PC-3 (cell line): ENCODE measurements at regions of chr4 and their contacts with region 1.

Region 1: GRCh38 chr4:20684852-20685763 is 15.2 kb upstream of the PACRGL start:
- DNase-seq: peak; percentile 58
- ATAC-seq: no peak
- H3K4me3 ChIP-seq: no peak overlapping the region
- H3K27ac ChIP-seq: no peak overlapping the region
- H3K4me1 ChIP-seq: no peaks in the 10 kb centered on the region; the same call in 1 of the 2 replicates
- H3K27me3 ChIP-seq: no peaks in the 10 kb centered on the region
- CTCF ChIP-seq: peak; percentile 66; the same call in 1 of the 2 replicates

Region 2: GRCh38 chr4:20305976-20306375 is 379.1 kb before region 1 on chr4:
- CTCF ChIA-PET with region 1: no interaction called
- POLR2A ChIA-PET with region 1: no interaction called
- intact Hi-C with region 1: loop called (anchors 10 kb)
- DNase-seq: peak; percentile 36
- ATAC-seq: no peak
- H3K4me3 ChIP-seq: no peak overlapping the region
- H3K27ac ChIP-seq: no peak overlapping the region
- H3K4me1 ChIP-seq: no peaks in the 10 kb centered on the region
- H3K27me3 ChIP-seq: no peaks in the 10 kb centered on the region
- CTCF ChIP-seq: peak; percentile 49

Region 3: GRCh38 chr4:20532871-20533870 is 151.9 kb before region 1 on chr4:
- CTCF ChIA-PET with region 1: no interaction called
- POLR2A ChIA-PET with region 1: no interaction called
- intact Hi-C with region 1: no loop called
- DNase-seq: peak; percentile 60
- ATAC-seq: peak; percentile 85
- H3K4me3 ChIP-seq: no peak overlapping the region
- H3K27ac ChIP-seq: peak overlapping the region; percentile 19
- H3K4me1 ChIP-seq: peaks cover 14% of the 10 kb centered on the region
- H3K27me3 ChIP-seq: no peaks in the 10 kb centered on the region
- CTCF ChIP-seq: no peak

Region 4: GRCh38 chr4:20544645-20545044 is 140.5 kb before region 1 on chr4:
- CTCF ChIA-PET with region 1: no interaction called
- POLR2A ChIA-PET with region 1: no interaction called
- intact Hi-C with region 1: loop called (anchors 5 kb)
- DNase-seq: peak; percentile 38
- ATAC-seq: peak; percentile 29; the same call in 1 of the 2 replicates
- H3K4me3 ChIP-seq: no peak overlapping the region
- H3K27ac ChIP-seq: no peak overlapping the region
- H3K4me1 ChIP-seq: no peaks in the 10 kb centered on the region
- H3K27me3 ChIP-seq: no peaks in the 10 kb centered on the region
- CTCF ChIP-seq: peak; percentile 64

Region 5: DNA sequence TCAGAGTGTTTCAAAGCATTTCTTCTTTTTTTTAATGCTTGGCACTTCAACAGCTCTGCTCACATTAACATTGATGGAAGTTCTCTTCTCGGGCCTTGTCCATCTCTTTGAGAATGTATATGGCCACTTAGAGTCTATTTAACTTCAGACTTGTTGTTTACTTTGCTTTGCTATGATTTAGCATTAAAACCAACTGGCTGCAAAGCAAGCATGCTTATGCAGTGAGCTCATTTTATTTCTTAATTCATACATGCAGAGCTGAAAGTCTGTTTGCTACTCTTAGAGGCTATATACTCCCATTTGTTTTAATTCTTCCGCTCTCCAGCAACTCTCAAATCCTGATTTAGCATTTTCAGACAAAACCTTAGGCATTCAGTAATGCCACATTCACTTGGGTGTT is 92.4 kb before region 1 on chr4:
- CTCF ChIA-PET with region 1: no interaction called
- POLR2A ChIA-PET with region 1: no interaction called
- intact Hi-C with region 1: no loop called
- DNase-seq: no peak
- ATAC-seq: peak; percentile 27; the same call in 1 of the 2 replicates
- H3K4me3 ChIP-seq: no peak overlapping the region
- H3K27ac ChIP-seq: no peak overlapping the region
- H3K4me1 ChIP-seq: no peaks in the 10 kb centered on the region
- H3K27me3 ChIP-seq: no peaks in the 10 kb centered on the region
- CTCF ChIP-seq: no peak

Region 6: DNA sequence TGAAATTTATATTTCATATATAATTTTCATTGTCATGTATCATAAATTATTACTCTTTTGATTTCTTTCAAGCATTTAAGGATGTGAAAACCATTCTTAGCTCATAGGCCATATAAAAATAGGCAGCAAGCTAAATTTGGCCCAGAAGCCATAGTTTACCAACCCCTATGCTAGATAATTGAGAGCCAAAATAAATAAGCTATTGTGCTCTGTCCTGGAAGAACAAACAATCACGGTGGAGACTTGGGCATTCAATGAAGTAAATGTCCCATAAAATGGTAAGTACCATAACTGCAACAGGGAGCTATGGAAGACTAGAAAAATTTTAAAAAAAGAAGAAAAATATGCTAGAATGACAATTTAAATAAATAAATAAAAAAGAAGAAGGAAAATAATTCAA is 45.8 kb before region 1 on chr4:
- CTCF ChIA-PET with region 1: no interaction called
- POLR2A ChIA-PET with region 1: no interaction called
- intact Hi-C with region 1: loop called (anchors 5 kb)
- DNase-seq: no peak
- ATAC-seq: peak; percentile 82
- H3K4me3 ChIP-seq: no peak overlapping the region
- H3K27ac ChIP-seq: no peak overlapping the region
- H3K4me1 ChIP-seq: no peaks in the 10 kb centered on the region; the same call in 1 of the 2 replicates
- H3K27me3 ChIP-seq: no peaks in the 10 kb centered on the region
- CTCF ChIP-seq: no peak